ENCODE measurements at regions of chr1 and their contacts with region 1.

Region 1: DNA sequence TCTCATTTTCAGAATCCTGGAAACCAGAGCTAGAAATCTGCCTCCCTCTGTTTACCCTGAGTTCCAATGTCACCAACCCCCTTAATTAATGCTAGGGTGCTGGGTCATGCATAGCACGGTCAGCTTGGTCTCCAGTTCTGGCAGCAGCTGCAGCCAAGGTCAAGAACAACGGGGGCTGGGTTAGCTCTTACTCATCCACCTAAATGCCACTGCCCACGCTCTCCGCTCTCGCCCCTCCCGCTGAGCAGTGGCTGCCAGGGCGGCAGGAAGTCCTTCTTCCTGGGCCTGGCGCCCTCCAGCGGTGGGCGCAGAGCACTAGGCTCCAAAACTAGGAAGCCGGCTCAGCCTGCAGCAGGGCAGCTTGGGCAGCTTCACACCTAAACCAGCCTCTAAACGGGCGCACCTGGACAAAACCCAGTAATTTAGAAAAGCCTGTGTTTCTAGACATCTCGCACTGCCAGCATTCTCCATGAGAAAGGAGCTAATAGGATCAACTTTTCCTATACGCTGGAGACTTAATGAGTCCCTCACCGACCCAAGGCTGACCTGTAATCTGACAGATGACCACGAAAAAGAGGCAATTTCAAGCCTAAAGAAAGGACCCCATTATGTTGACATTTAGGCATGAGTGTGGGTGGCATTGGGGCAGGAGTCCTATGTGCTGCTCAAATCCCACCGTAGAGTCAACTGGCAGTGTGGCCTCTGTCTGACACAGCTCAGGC is 78.3 kb upstream of the LRRN2 start:
- DNase-seq: peak; percentile 55 to 87 (median 73)
- ATAC-seq: peak; percentile 86 to 97 (median 93)
- H3K4me3 ChIP-seq: no peak overlapping the region
- H3K27ac ChIP-seq: no peak overlapping the region
- H3K4me1 ChIP-seq: peaks cover 0 to 13% (median 7%) of the 10 kb centered on the region in 12 donors
- H3K27me3 ChIP-seq: peaks cover 0 to 38% (median 17%) of the 10 kb centered on the region in 9 donors
- CTCF ChIP-seq: peak; percentile 63 to 88 (median 76)
- POLR2A ChIP-seq: no peak

Region 2: GRCh38 chr1:204685236-204686006 is 78.4 kb before region 1 on chr1 and contains the start of gene LRRN2:
- intact Hi-C with region 1: loop called in 1 of 10 experiments (anchors 2 kb)
- DNase-seq: peak in 3 of 5 donors; percentile 22 to 37 (median 28)
- ATAC-seq: peak in 3 of 4 donors; percentile 25 to 67 (median 57)
- H3K4me3 ChIP-seq: peak within 1 kb of the TSS; percentile 30 to 73 (median 56)
- H3K27ac ChIP-seq: peak within 1 kb of the TSS in 11 of 12 donors; percentile 8 to 78 (median 45)
- H3K4me1 ChIP-seq: peaks cover 0 to 20% (median 7%) of the 10 kb centered on the region in 12 donors
- H3K27me3 ChIP-seq: peaks cover 0 to 46% (median 9%) of the 10 kb centered on the region in 9 donors
- CTCF ChIP-seq: no peak
- POLR2A ChIP-seq: no peak
- total RNA-seq, gene LRRN2: 1.1 to 4.2 (median 1.5) TPM

Region 3: DNA sequence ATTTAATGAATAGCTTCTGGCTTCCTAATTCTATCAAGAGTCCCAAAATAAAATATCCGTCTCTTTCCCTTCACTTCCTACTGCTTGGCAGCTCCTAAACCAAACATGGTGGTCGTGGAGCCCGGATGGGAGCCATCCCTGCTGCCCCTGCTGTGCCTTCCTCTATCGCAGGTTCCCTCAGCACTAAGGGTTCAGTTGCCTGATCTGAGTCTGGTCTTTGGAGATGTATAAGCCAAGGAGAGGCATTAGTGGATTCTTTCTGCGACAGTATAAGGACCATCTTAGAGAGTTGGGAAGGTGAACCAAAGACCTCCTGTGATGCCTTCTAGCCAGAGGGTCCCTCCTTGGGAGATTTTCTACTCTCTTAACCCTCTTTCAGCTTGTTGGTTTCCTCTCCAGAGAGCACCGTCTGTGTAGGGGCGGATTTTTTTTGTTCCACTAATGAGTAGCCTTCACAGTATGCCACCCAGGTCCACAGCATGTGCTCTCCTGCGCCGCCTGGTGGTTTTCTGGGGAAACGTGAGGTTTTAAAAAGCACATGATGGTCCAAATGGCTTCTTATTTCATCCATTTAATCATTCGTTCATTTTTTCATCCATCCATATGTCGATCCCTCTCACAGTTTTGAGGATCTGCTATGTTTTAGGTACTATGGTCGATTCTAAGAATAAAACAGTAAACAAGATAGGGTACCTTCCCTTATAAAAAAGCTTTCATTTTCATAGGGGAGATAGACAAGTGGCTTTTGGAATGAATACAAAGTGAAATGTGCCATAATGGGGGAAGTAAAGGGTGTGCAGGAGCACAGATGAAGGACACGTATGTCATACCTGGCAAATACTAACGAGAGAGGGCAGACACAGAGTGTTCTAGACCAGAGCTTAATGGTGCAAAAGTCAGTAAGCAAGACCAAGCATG is 177.8 kb after region 1 on chr1:
- intact Hi-C with region 1: no loop called
- DNase-seq: peak; percentile 60 to 77 (median 62)
- ATAC-seq: peak; percentile 63 to 84 (median 74)
- H3K4me3 ChIP-seq: no peak overlapping the region
- H3K27ac ChIP-seq: peak overlapping the region in 1 of 12 donors; percentile 4
- H3K4me1 ChIP-seq: peaks cover 0 to 10% (median 3%) of the 10 kb centered on the region in 12 donors
- H3K27me3 ChIP-seq: no peaks in the 10 kb centered on the region
- CTCF ChIP-seq: peak; percentile 80 to 97 (median 90)
- POLR2A ChIP-seq: no peak